ENCODE measurements at regions of chr10 and their contacts with region 1.

Region 1: DNA sequence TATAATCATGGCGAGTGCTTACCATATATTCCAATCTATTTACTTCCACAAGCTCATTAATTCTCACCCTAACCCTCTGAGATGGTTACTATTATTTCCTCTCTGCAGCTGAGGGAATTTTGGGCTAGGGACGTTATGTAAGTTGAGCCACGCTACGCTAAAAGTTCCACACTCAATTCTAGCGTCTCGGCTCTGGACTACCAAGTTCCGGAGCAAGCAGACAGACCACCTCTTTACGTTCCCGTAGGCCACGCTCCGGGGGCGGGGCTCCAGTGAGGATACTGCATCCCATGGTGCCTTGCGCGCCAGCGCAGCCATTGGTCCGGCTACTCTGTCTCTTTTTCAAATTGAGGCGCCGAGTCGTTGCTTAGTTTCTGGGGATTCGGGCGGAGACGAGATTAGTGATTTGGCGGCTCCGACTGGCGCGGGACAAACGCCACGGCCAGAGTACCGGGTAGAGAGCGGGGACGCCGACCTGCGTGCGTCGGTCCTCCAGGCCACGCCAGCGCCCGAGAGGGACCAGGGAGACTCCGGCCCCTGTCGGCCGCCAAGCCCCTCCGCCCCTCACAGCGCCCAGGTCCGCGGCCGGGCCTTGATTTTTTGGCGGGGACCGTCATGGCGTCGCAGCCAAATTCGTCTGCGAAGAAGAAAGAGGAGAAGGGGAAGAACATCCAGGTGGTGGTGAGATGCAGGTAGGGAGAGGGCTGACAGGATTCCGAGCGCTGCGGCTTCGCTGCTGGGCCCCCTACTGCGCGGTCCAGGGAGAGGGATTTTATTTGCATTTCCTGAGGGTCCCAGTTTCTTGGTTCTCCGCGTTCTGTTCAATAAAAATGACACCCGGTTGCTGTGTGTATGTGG is at the start of gene KIF11:
- DNase-seq: peak; percentile 89 to 95 (median 94)
- ATAC-seq: peak; percentile 89
- H3K4me3 ChIP-seq: peak within 1 kb of the TSS; percentile 83
- H3K4me3 Mint-ChIP-seq: peak within 1 kb of the TSS; percentile 95 to 100 (median 99)
- H3K27ac ChIP-seq: peak within 1 kb of the TSS; percentile 96
- H3K27ac Mint-ChIP-seq: peak within 1 kb of the TSS; percentile 96 to 100 (median 100)
- H3K4me1 ChIP-seq: peaks cover 12 to 28% of the 10 kb centered on the region in 2 donors
- H3K4me1 Mint-ChIP-seq: peaks cover 9 to 54% (median 28%) of the 10 kb centered on the region in 7 donors
- H3K27me3 ChIP-seq: no peaks in the 10 kb centered on the region
- H3K27me3 Mint-ChIP-seq: peaks cover 0 to 5% (median 0%) of the 10 kb centered on the region in 5 donors
- total RNA-seq, gene KIF11: 0.32 to 52.6 (median 0.75) TPM

Region 2: GRCh38 chr10:91163269-91163868 is 1429.6 kb before region 1 on chr10:
- CTCF ChIA-PET with region 1: no interaction called
- POLR2A ChIA-PET with region 1: no interaction called
- intact Hi-C with region 1: loop called in 1 of 2 experiments (anchors 5 kb)
- DNase-seq: peak; percentile 72 to 92 (median 88)
- ATAC-seq: peak; percentile 75
- H3K4me3 ChIP-seq: peak overlapping the region; percentile 74
- H3K4me3 Mint-ChIP-seq: peak overlapping the region; percentile 88 to 95 (median 93)
- H3K27ac ChIP-seq: peak overlapping the region; percentile 96
- H3K27ac Mint-ChIP-seq: peak overlapping the region; percentile 88 to 98 (median 95)
- H3K4me1 ChIP-seq: peaks cover 8 to 20% of the 10 kb centered on the region in 2 donors
- H3K4me1 Mint-ChIP-seq: peaks cover 27 to 61% (median 51%) of the 10 kb centered on the region in 7 donors
- H3K27me3 ChIP-seq: no peaks in the 10 kb centered on the region
- H3K27me3 Mint-ChIP-seq: peaks cover 0 to 19% (median 0%) of the 10 kb centered on the region in 5 donors

Region 3: DNA sequence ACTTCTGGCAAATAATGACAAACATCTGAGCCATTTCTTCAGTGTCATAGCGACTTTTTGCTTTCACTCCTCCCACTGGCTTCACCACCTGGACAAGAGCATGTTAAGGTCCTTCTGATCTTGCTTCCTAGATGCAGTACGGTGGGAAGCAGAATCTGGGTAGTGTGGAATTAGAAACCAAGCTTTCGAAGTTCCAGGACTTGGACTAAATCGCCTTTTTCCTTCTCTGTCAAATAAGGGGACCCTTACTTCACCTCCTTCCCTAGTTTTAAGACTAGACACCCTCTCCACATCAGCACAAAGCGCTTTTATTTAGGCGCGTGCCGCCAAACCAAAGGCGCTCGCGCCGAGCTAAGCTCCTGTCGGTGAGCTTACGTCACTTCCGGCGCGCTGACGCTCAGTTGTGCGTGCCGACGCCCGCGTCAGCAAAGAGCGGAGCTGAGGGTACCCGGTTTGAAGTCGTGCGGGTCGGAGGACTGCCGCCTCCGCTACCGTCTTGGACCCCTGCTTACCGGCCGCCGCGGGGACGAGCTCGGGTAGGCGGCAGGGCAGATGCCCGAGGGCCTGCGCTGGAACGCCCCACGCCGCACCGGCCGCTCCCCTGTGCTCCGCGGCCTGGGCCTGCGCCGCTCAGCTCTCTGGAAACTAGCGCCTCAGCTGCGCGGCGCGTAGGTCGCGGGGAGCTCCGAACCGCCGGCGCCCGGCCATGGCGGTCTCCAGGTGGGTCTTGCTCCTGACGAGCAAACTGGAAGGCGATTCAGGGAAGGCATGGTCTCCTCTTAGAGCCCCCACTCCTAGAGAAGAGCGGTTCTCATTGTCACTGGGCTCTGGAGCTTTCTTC is 669.4 kb before region 1 on chr10 and contains the start of gene BTAF1:
- CTCF ChIA-PET with region 1: no interaction called
- POLR2A ChIA-PET with region 1: interaction called, 4 read pairs
- intact Hi-C with region 1: loop called (anchors 2 to 5 kb)
- DNase-seq: peak; percentile 86 to 93 (median 91)
- ATAC-seq: peak; percentile 97
- H3K4me3 ChIP-seq: peak within 1 kb of the TSS; percentile 70
- H3K4me3 Mint-ChIP-seq: peak within 1 kb of the TSS; percentile 91 to 100 (median 96)
- H3K27ac ChIP-seq: peak within 1 kb of the TSS; percentile 96
- H3K27ac Mint-ChIP-seq: peak within 1 kb of the TSS; percentile 97 to 99 (median 98)
- H3K4me1 ChIP-seq: peaks cover 9 to 25% of the 10 kb centered on the region in 2 donors
- H3K4me1 Mint-ChIP-seq: peaks cover 22 to 62% (median 45%) of the 10 kb centered on the region in 7 donors
- H3K27me3 ChIP-seq: no peaks in the 10 kb centered on the region
- H3K27me3 Mint-ChIP-seq: peaks cover under 1 to 8% (median 5%) of the 10 kb centered on the region in 5 donors
- total RNA-seq, gene BTAF1: 55.7 to 84.8 (median 78.5) TPM

Region 4: DNA sequence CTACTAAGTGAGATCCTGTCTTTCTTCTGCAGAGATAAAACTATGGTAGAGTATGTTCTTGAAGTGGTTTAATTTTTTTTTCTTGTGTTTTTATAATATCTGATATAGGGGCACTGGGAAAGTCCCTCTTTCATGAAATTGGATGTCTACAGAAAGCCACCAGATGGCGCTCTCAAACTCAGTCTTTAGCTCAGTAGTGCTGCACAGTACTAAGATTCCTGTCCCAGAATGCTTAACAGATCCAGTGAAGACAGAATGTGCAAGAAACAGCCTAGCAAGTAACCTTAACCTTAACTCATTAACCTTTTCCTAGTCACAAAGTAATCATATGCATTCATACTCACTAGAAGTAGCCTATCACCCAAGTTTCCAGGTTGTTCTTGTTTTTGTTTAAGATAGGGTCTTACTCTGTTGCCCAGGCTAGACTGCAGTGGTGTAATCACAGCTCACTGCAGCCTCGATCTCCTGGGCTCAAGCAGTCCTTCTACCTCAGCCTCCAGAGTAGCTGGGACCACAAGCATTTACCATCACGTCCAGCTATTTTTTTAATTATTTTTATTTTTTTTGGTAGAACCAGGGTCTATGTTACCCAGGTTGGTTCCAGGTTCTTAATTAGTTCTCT is 75.8 kb before region 1 on chr10:
- CTCF ChIA-PET with region 1: interaction called, 7 read pairs
- POLR2A ChIA-PET with region 1: interaction called, 6 read pairs
- intact Hi-C with region 1: loop called (anchors 1 to 5 kb)
- DNase-seq: peak; percentile 18 to 74 (median 64)
- ATAC-seq: peak; percentile 98
- H3K4me3 ChIP-seq: no peak overlapping the region
- H3K4me3 Mint-ChIP-seq: no peak overlapping the region
- H3K27ac ChIP-seq: no peak overlapping the region
- H3K27ac Mint-ChIP-seq: peak overlapping the region in 3 of 9 donors; percentile 46 to 64 (median 54)
- H3K4me1 ChIP-seq: peaks cover 0 to 7% of the 10 kb centered on the region in 2 donors
- H3K4me1 Mint-ChIP-seq: peaks cover 7 to 9% (median 8%) of the 10 kb centered on the region in 7 donors
- H3K27me3 ChIP-seq: no peaks in the 10 kb centered on the region
- H3K27me3 Mint-ChIP-seq: no peaks in the 10 kb centered on the region

Region 5: DNA sequence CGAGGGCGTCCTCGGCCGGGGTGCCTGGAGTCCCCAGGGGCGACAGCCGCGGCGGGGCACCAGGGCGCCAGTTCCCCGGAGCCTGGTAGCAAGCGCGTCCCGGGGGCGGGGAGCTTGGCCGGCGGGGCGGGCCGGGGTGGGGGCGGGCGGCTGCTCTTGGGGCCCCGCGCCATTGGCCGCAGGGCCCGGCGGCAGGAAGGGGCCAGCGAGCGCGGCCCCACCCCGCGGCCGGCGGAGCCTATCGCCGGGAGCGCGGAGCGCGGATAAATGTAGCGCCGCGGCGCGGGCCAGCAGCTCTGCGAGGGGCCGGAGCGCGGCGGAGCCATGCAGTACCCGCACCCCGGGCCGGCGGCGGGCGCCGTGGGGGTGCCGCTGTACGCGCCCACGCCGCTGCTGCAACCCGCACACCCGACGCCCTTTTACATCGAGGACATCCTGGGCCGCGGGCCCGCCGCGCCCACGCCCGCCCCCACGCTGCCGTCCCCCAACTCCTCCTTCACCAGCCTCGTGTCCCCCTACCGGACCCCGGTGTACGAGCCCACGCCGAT is 96.7 kb after region 1 on chr10 and contains the start of gene HHEX:
- CTCF ChIA-PET with region 1: no interaction called
- POLR2A ChIA-PET with region 1: no interaction called
- intact Hi-C with region 1: loop called (anchors 2 to 5 kb)
- DNase-seq: peak in 3 of 9 donors; percentile 19 to 50 (median 39)
- ATAC-seq: peak; percentile 82
- H3K4me3 ChIP-seq: peak within 1 kb of the TSS; percentile 37
- H3K4me3 Mint-ChIP-seq: peak within 1 kb of the TSS; percentile 73 to 90 (median 82)
- H3K27ac ChIP-seq: no peak within 1 kb of the TSS
- H3K27ac Mint-ChIP-seq: no peak within 1 kb of the TSS
- H3K4me1 ChIP-seq: peaks cover 0 to 29% of the 10 kb centered on the region in 2 donors
- H3K4me1 Mint-ChIP-seq: peaks cover 16 to 31% (median 27%) of the 10 kb centered on the region in 7 donors
- H3K27me3 ChIP-seq: peaks cover 10 to 26% of the 10 kb centered on the region in 2 donors
- H3K27me3 Mint-ChIP-seq: peaks cover 40 to 88% (median 75%) of the 10 kb centered on the region in 5 donors
- total RNA-seq, gene HHEX: 0.27 to 21.4 (median 5.5) TPM in 3 of 5 experiments, not detected in the others

Region 6: DNA sequence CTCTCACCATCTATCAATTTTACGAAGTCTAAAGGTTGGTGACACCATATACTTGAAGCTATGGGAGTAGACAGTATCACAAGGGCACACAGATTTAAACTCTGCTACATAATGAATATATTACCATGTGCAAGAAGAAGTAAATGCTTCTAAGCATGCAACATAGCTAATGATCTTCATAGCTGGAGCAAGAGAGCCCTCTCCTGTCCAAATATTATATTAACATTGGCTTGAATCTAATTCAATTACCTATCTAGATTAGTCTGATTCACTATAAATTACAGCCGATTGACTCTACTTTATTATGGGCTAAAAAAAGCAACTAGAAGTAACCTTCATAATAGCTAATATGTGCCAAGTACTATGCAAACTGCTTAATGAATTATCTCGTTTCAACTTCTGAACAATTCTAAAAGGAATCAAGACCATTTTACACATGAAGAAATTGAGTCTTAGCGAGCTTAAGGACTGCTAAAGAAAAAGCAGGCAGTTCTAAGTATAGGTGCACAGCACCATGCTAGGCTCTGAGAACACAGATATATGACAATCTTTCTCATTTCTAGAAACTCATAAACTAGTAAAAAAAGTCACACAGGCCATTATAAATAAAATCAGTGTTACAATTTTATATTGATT is 1087.5 kb after region 1 on chr10:
- CTCF ChIA-PET with region 1: no interaction called
- POLR2A ChIA-PET with region 1: no interaction called
- intact Hi-C with region 1: no loop called
- DNase-seq: peak in 1 of 9 donors; percentile 6
- ATAC-seq: peak; percentile 49
- H3K4me3 ChIP-seq: no peak overlapping the region
- H3K4me3 Mint-ChIP-seq: no peak overlapping the region
- H3K27ac ChIP-seq: no peak overlapping the region
- H3K27ac Mint-ChIP-seq: no peak overlapping the region
- H3K4me1 ChIP-seq: no peaks in the 10 kb centered on the region
- H3K4me1 Mint-ChIP-seq: peaks cover 0 to 2% (median 0%) of the 10 kb centered on the region in 7 donors
- H3K27me3 ChIP-seq: no peaks in the 10 kb centered on the region
- H3K27me3 Mint-ChIP-seq: no peaks in the 10 kb centered on the region

Region 7: GRCh38 chr10:93702211-93703001 is 1109.4 kb after region 1 on chr10 and contains the start of gene FRA10AC1:
- CTCF ChIA-PET with region 1: no interaction called
- POLR2A ChIA-PET with region 1: no interaction called
- intact Hi-C with region 1: loop called in 1 of 2 experiments (anchors 2 kb)
- DNase-seq: peak; percentile 77 to 92 (median 85)
- ATAC-seq: peak; percentile 97
- H3K4me3 ChIP-seq: peak within 1 kb of the TSS; percentile 85
- H3K4me3 Mint-ChIP-seq: no peak within 1 kb of the TSS
- H3K27ac ChIP-seq: peak within 1 kb of the TSS; percentile 73
- H3K27ac Mint-ChIP-seq: no peak within 1 kb of the TSS
- H3K4me1 ChIP-seq: peaks cover 9 to 16% of the 10 kb centered on the region in 2 donors
- H3K4me1 Mint-ChIP-seq: peaks cover 8 to 29% (median 11%) of the 10 kb centered on the region in 7 donors
- H3K27me3 ChIP-seq: no peaks in the 10 kb centered on the region
- H3K27me3 Mint-ChIP-seq: no peaks in the 10 kb centered on the region
- total RNA-seq, gene FRA10AC1: 15.5 to 31.0 (median 22.7) TPM

Measured in naive thymus-derived CD4-positive, alpha-beta T cell (primary cell).